Breast epithelium (tissue), 4 donors: ENCODE measurements at regions of chr17 and their contacts with region 1.

Region 1: GRCh38 chr17:75001915-75002843 is 10.3 kb upstream of the MRPL58 start:
- DNase-seq: no peak
- H3K4me3 ChIP-seq: no peak overlapping the region
- H3K27ac ChIP-seq: no peak overlapping the region
- H3K4me1 ChIP-seq: no peaks in the 10 kb centered on the region
- H3K27me3 ChIP-seq: no peaks in the 10 kb centered on the region
- CTCF ChIP-seq: no peak
- POLR2A ChIP-seq: no peak

Region 2: DNA sequence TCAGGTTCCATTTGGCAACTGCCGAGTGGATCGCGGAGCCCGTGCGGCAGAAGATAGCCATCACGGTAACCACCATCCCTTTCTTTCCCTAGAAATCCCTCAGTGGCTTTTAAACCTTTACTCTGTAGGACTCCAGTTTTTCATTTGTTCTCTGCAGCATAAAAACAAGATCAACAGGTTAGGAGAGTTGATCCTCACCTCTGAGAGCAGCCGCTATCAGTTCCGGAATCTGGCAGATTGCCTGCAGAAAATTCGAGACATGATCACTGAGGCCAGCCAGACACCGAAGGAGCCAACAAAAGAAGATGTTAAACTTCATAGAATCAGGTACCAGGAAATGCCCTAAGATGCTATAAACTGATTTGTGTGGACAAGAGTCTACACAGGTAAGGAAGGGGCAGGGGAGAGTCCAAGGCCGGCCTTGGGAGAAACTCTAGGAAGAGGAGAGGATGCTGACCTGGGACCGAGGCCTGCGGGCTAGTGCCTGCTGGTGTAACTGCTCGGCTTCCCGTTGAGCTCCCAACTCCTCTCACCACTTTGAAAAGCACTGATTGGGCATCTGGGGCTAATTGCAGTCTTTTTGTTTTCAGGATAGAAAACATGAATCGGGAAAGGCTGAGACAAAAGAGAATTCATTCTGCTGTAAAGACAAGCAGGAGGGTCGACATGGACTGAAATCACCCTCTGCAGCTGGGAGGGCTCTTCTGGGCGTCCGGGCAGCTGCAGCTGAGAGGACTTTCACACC is 18.3 kb after region 1 on chr17:
- intact Hi-C with region 1: loop called (anchors 2 kb)
- DNase-seq: no peak
- H3K4me3 ChIP-seq: no peak overlapping the region
- H3K27ac ChIP-seq: no peak overlapping the region
- H3K4me1 ChIP-seq: no peaks in the 10 kb centered on the region
- H3K27me3 ChIP-seq: no peaks in the 10 kb centered on the region
- CTCF ChIP-seq: no peak
- POLR2A ChIP-seq: no peak

Region 3: GRCh38 chr17:75147878-75148546 is 145.8 kb after region 1 on chr17:
- intact Hi-C with region 1: no loop called
- DNase-seq: no peak
- H3K4me3 ChIP-seq: no peak overlapping the region
- H3K27ac ChIP-seq: no peak overlapping the region
- H3K4me1 ChIP-seq: no peaks in the 10 kb centered on the region
- H3K27me3 ChIP-seq: no peaks in the 10 kb centered on the region
- CTCF ChIP-seq: no peak
- POLR2A ChIP-seq: no peak